BJ (cell line): ENCODE measurements at regions of chr17 and their contacts with region 1.

Region 1: DNA sequence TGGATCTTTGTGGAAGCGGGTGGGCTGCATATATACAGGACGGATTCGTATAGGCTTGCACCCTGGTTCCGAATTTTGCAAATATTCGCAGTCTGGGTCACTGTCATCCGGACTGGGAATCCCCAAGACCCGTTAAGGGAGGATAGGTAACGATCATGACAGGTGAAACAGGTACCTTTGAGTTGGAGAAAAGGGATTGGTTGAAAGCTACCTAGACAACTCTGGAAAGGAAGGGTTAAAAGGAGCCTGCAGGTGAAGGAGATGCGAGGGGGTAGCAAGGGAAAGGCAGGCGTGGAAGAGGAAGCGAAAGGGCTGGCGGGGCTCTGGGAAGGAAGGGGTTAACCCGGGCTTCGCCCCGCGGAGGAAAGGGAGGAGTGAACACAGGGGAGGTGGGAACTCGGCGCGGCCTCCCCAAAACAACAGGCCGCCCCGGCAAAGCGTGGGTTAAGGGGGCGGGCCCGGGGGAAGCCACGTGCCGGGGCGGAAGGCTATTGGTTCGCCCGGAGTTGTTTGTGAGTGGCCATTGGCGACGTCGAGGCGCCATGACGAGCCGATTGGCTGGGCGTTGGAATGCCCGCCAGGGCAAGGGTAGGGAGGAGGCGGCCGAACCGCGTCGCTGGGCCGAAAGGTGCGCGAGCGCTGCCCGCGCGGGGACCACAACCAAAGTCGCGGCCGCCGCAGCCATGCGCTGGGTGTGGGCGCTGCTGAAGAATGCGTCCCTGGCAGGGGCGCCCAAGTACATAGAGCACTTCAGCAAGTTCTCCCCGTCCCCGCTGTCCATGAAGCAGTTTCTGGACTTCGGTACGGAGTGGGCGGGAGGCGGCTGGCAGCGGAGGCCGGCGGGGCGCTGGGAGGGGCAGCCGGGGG is at the start of gene PDK2:
- DNase-seq: peak; percentile 63
- H3K4me3 ChIP-seq: peak within 1 kb of the TSS; percentile 91
- H3K27me3 ChIP-seq: no peaks in the 10 kb centered on the region
- CTCF ChIP-seq: no peak
- polyA plus RNA-seq, gene PDK2: 79.3 and 155 TPM in 2 replicates

Region 2: GRCh38 chr17:49899191-49899485 is 195.8 kb before region 1 on chr17:
- CTCF ChIA-PET with region 1: no interaction called
- POLR2A ChIA-PET with region 1: no interaction called
- DNase-seq: no peak
- H3K4me3 ChIP-seq: no peak overlapping the region
- H3K27me3 ChIP-seq: peaks cover 42% of the 10 kb centered on the region
- CTCF ChIP-seq: peak; percentile 20; the same call in 1 of the 2 replicates

Region 3: GRCh38 chr17:50055426-50056230 is 39.4 kb before region 1 on chr17 and contains the start of gene ITGA3:
- CTCF ChIA-PET with region 1: interaction called, 25 read pairs
- POLR2A ChIA-PET with region 1: no interaction called
- DNase-seq: no peak
- H3K4me3 ChIP-seq: peak within 1 kb of the TSS; percentile 84
- H3K27me3 ChIP-seq: no peaks in the 10 kb centered on the region
- CTCF ChIP-seq: no peak
- polyA plus RNA-seq, gene ITGA3: 71.9 and 184 TPM in 2 replicates

Region 4: GRCh38 chr17:50064258-50065001 is 30.6 kb before region 1 on chr17:
- CTCF ChIA-PET with region 1: interaction called, 17 read pairs
- POLR2A ChIA-PET with region 1: no interaction called
- DNase-seq: peak; percentile 86
- H3K4me3 ChIP-seq: no peak overlapping the region
- H3K27me3 ChIP-seq: no peaks in the 10 kb centered on the region
- CTCF ChIP-seq: no peak

Region 5: GRCh38 chr17:50114849-50115357 is 19.9 kb after region 1 on chr17:
- CTCF ChIA-PET with region 1: interaction called, 17 read pairs
- POLR2A ChIA-PET with region 1: no interaction called
- DNase-seq: no peak
- H3K4me3 ChIP-seq: no peak overlapping the region
- H3K27me3 ChIP-seq: peaks cover 2% of the 10 kb centered on the region
- CTCF ChIP-seq: peak; percentile 75